Common myeloid progenitor, CD34-positive (primary cell): ENCODE measurements at regions of chr5 and their contacts with region 1.

Region 1: GRCh38 chr5:112757468-112758208 is 20.0 kb downstream of the APC start:
- DNase-seq: peak; percentile 67 to 82 (median 78)
- H3K4me3 ChIP-seq: no peak overlapping the region
- H3K27ac ChIP-seq: no peak overlapping the region
- H3K4me1 ChIP-seq: no peaks in the 10 kb centered on the region
- H3K27me3 ChIP-seq: no peaks in the 10 kb centered on the region

Region 2: DNA sequence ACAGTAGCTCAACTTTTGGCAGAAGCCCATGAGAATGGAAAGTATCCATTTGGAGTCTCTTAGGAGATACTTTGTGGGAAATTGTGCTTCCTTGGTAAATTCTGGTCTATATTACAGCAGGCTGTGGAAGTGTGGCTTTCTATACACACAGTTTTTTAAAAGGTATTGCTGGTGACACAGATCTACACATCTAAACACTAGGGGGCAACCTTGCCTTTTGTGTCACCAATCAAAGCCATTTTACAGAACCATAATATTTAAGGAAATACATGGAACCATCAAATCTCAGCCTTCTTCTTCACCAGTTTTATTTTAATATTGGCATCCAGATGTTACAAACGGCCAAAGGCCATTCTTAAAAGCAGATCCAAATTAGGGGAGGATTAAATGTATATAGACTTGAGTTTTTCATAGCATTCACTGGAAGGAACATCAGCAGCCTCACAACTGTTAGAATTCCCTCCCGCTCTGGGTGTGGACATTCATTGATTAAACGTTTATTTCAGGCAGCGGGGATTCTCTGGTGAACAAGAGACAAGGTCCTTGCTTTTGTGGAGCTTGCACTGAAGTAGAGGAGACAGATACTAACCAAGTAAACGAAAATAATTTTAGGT is 206.1 kb before region 1 on chr5:
- CTCF ChIA-PET with region 1: interaction called, 91 read pairs
- POLR2A ChIA-PET with region 1: interaction called, 6 read pairs
- DNase-seq: peak; percentile 70 to 83 (median 73)
- H3K4me3 ChIP-seq: no peak overlapping the region
- H3K27ac ChIP-seq: no peak overlapping the region
- H3K4me1 ChIP-seq: peaks cover 0 to 3% (median 0%) of the 10 kb centered on the region in 4 experiments
- H3K27me3 ChIP-seq: peaks cover 0 to 22% (median 3%) of the 10 kb centered on the region in 5 experiments

Region 3: GRCh38 chr5:112691758-112692157 is 65.9 kb before region 1 on chr5:
- CTCF ChIA-PET with region 1: interaction called, 48 read pairs
- POLR2A ChIA-PET with region 1: interaction called, 3 read pairs
- DNase-seq: peak; percentile 25 to 60 (median 56)
- H3K4me3 ChIP-seq: no peak overlapping the region
- H3K27ac ChIP-seq: no peak overlapping the region
- H3K4me1 ChIP-seq: peaks cover 0 to 6% (median 0%) of the 10 kb centered on the region in 4 experiments
- H3K27me3 ChIP-seq: peaks cover 0 to 2% (median 0%) of the 10 kb centered on the region in 5 experiments

Region 4: GRCh38 chr5:112710896-112711295 is 46.7 kb before region 1 on chr5:
- CTCF ChIA-PET with region 1: interaction called, 11 read pairs
- POLR2A ChIA-PET with region 1: no interaction called
- DNase-seq: no peak
- H3K4me3 ChIP-seq: no peak overlapping the region
- H3K27ac ChIP-seq: no peak overlapping the region
- H3K4me1 ChIP-seq: peaks cover 0 to 32% (median 20%) of the 10 kb centered on the region in 4 experiments
- H3K27me3 ChIP-seq: no peaks in the 10 kb centered on the region

Region 5: DNA sequence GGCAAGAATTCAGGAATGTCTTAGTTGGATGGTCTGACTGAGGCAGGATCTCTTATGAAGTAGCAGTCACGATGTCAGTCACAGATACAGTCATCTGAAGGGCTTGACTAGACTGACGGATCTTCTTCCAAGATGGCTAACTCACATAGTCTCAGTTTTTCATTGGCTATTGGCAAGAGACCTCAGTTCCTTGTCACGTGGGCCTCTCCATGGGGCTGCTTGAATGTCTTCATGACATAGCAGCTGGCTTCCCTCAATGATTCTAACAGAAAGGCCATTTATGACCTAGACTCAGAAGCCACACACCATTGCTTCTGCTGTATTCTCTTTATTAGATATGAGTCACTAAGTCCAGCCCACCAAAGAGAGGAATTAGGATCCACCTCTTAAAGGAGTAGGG is 15.2 kb before region 1 on chr5:
- CTCF ChIA-PET with region 1: interaction called, 26 read pairs
- POLR2A ChIA-PET with region 1: no interaction called
- DNase-seq: no peak
- H3K4me3 ChIP-seq: no peak overlapping the region
- H3K27ac ChIP-seq: no peak overlapping the region
- H3K4me1 ChIP-seq: peaks cover 2 to 19% (median 10%) of the 10 kb centered on the region in 4 experiments
- H3K27me3 ChIP-seq: no peaks in the 10 kb centered on the region

Region 6: GRCh38 chr5:112811023-112811422 is 53.4 kb after region 1 on chr5:
- CTCF ChIA-PET with region 1: no interaction called
- POLR2A ChIA-PET with region 1: no interaction called
- DNase-seq: no peak
- H3K4me3 ChIP-seq: no peak overlapping the region
- H3K27ac ChIP-seq: no peak overlapping the region
- H3K4me1 ChIP-seq: no peaks in the 10 kb centered on the region
- H3K27me3 ChIP-seq: no peaks in the 10 kb centered on the region